B cell (primary cell): ENCODE measurements at regions of chr16 and their contacts with region 1.

Region 1: DNA sequence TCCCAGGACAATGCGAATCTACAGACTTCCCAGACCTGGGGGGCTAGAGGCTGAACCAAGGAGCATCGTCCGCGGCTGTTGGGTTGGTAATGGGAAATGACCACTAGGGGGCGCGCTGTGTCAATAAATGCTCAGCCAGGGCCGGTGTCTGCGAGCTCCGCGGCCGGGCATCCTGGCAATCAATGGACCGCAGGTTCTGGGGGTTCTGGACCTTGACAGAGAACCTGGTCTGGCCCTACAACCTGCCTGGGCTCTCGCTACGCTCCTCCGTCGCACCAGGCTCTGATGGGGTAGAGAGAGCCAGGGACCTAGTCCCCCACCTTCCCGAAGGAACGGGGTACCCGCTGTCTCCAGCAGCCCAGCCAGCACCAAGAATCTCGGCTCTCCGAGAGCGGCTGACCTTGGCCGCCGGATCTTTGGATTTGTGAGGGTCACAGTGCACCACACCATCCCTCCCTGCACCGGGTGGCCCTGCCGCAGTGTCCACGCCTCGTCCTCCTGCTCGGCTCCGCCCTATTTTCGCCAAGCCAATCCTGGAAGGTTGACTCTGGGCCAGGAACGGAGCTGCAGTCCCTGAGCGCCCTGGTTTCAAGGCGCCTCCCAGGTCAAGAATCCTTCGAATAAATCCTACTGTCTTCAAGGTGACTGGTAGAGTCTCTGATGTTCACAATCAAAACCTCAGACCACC is 20.4 kb upstream of the BEAN1 start:
- DNase-seq: peak; percentile 88
- ATAC-seq: peak; percentile 92
- H3K4me3 ChIP-seq: peak overlapping the region in 4 of 5 experiments; percentile 10 to 56 (median 44)
- H3K4me3 Mint-ChIP-seq: peak overlapping the region; percentile 79
- H3K27ac ChIP-seq: no peak overlapping the region
- H3K27ac Mint-ChIP-seq: no peak overlapping the region
- H3K4me1 ChIP-seq: peaks cover 16 to 18% of the 10 kb centered on the region in 2 donors
- H3K4me1 Mint-ChIP-seq: peaks cover 14% of the 10 kb centered on the region
- H3K27me3 ChIP-seq: peaks cover 0 to 22% (median 17%) of the 10 kb centered on the region in 4 experiments
- H3K27me3 Mint-ChIP-seq: peaks cover 47% of the 10 kb centered on the region
- CTCF ChIP-seq: peak; percentile 96

Region 2: GRCh38 chr16:66483689-66484481 is 77.2 kb after region 1 on chr16:
- CTCF ChIA-PET with region 1: interaction called, 46 read pairs
- POLR2A ChIA-PET with region 1: no interaction called
- intact Hi-C with region 1: loop called (anchors 1 kb)
- DNase-seq: peak; percentile 81
- ATAC-seq: peak; percentile 93
- H3K4me3 ChIP-seq: no peak overlapping the region
- H3K4me3 Mint-ChIP-seq: no peak overlapping the region
- H3K27ac ChIP-seq: no peak overlapping the region
- H3K27ac Mint-ChIP-seq: peak overlapping the region; percentile 5
- H3K4me1 ChIP-seq: peaks cover 14 to 20% of the 10 kb centered on the region in 2 donors
- H3K4me1 Mint-ChIP-seq: peaks cover 15% of the 10 kb centered on the region
- H3K27me3 ChIP-seq: peaks cover 0 to 9% (median under 1%) of the 10 kb centered on the region in 4 experiments
- H3K27me3 Mint-ChIP-seq: peaks cover 3% of the 10 kb centered on the region
- CTCF ChIP-seq: peak; percentile 96

Region 3: GRCh38 chr16:66516808-66517585 is 110.3 kb after region 1 on chr16:
- CTCF ChIA-PET with region 1: interaction called, 12 read pairs
- POLR2A ChIA-PET with region 1: no interaction called
- intact Hi-C with region 1: no loop called
- DNase-seq: peak; percentile 94
- ATAC-seq: peak; percentile 89
- H3K4me3 ChIP-seq: peak overlapping the region; percentile 41 to 62 (median 53)
- H3K4me3 Mint-ChIP-seq: peak overlapping the region; percentile 96
- H3K27ac ChIP-seq: peak overlapping the region; percentile 94 to 97
- H3K27ac Mint-ChIP-seq: peak overlapping the region; percentile 99
- H3K4me1 ChIP-seq: peaks cover 59 to 63% of the 10 kb centered on the region in 2 donors
- H3K4me1 Mint-ChIP-seq: peaks cover 72% of the 10 kb centered on the region
- H3K27me3 ChIP-seq: peaks cover 0 to 3% (median 0%) of the 10 kb centered on the region in 4 experiments
- H3K27me3 Mint-ChIP-seq: peaks cover under 1% of the 10 kb centered on the region
- CTCF ChIP-seq: no peak

Region 4: DNA sequence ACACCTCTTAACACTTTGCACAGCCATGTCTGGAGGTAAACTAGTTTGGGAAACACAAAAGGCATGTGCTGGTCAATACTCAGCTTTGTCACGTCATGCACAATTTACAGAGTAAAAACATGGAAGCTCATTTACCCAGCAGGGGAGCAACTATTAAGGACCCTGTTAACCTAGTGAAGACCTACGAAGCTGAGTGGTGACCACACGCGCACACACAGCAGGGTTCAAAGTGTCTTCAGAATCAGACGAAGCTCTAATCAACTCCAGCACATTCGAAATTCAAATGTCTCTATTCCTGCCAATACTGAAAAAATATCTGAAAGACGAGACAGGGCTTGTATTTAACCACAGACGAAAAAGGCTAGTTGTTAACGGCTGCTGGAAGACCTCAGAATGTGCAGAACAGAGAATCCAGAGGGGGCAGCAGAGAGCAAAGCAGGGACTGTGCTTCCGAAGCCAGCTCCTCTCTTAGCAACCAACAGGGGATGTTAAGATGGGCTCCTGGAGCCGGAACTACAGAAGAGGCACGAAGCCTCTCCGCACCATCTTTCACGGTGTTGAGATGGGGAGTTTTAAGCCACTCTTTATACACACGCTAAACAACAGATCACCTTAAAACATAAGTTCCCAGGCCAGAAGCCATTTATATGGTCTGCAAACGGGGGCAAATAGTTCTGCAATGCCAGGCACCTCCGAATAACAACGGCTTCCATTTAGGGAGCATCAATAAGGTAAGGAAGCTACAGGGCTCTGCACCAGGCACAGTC is 244.2 kb after region 1 on chr16:
- CTCF ChIA-PET with region 1: no interaction called
- POLR2A ChIA-PET with region 1: no interaction called
- intact Hi-C with region 1: loop called (anchors 1 kb)
- DNase-seq: peak; percentile 83
- ATAC-seq: peak; percentile 96
- H3K4me3 ChIP-seq: peak overlapping the region in 2 of 5 experiments; percentile 10 to 18
- H3K4me3 Mint-ChIP-seq: peak overlapping the region; percentile 78
- H3K27ac ChIP-seq: no peak overlapping the region
- H3K27ac Mint-ChIP-seq: peak overlapping the region; percentile 21
- H3K4me1 ChIP-seq: peaks cover 5 to 9% of the 10 kb centered on the region in 2 donors
- H3K4me1 Mint-ChIP-seq: peaks cover 8% of the 10 kb centered on the region
- H3K27me3 ChIP-seq: peaks cover 0 to 21% (median 4%) of the 10 kb centered on the region in 4 experiments
- H3K27me3 Mint-ChIP-seq: peaks cover 20% of the 10 kb centered on the region
- CTCF ChIP-seq: peak; percentile 95

Region 5: GRCh38 chr16:66751303-66751991 is 344.8 kb after region 1 on chr16 and contains the start of gene DYNC1LI2:
- CTCF ChIA-PET with region 1: interaction called, 10 read pairs
- POLR2A ChIA-PET with region 1: no interaction called
- intact Hi-C with region 1: loop called (anchors 1 kb)
- DNase-seq: peak; percentile 92
- ATAC-seq: peak; percentile 95
- H3K4me3 ChIP-seq: peak within 1 kb of the TSS; percentile 43 to 92 (median 88)
- H3K4me3 Mint-ChIP-seq: peak within 1 kb of the TSS; percentile 87
- H3K27ac ChIP-seq: peak within 1 kb of the TSS; percentile 13 to 85
- H3K27ac Mint-ChIP-seq: peak within 1 kb of the TSS; percentile 89
- H3K4me1 ChIP-seq: peaks cover 18 to 19% of the 10 kb centered on the region in 2 donors
- H3K4me1 Mint-ChIP-seq: peaks cover 33% of the 10 kb centered on the region
- H3K27me3 ChIP-seq: peaks cover 0 to 11% (median 8%) of the 10 kb centered on the region in 4 experiments
- H3K27me3 Mint-ChIP-seq: peaks cover 20% of the 10 kb centered on the region
- CTCF ChIP-seq: peak; percentile 87
- total RNA-seq, gene DYNC1LI2: 109 and 111 TPM in 2 replicates